Heart right ventricle (tissue), 16 donors: ENCODE measurements at regions of chr15 and their contacts with region 1.

Region 1: DNA sequence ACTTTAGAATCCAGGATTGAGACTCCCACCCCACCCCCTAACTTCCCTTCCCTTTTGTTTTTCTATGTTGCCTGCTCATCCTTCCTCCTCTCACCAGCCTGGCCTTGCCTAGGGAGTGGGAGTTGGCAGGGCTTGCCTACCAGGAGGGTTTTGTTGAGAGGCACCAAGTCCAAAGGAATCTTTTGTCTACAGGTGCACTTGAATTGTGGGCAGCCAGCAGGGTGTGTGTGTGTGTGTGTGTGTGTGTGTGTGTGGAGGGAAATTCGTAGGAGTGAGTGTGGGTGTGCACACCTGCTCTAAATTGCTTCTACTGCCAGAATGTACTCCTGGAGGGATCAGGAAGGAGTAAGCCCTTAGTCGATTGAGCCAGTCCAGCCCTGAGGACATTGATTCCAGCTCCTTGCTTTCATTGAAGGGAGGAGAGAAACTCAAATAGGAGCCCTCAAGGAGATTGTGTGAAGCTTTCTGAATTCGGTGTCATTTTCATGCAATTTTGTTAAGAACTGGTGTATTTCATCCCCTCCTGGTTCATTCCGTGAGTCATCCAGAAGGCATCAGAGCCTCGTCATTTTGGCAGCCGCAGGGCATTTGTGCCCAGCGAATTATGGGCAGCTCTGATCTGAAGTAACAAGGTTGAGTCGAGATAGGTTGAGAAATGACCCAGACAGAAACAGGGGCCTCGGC is 112.1 kb downstream of the SLCO3A1 start:
- DNase-seq: no peak
- ATAC-seq: peak in 6 of 8 donors; percentile 17 to 41 (median 28)
- H3K4me3 ChIP-seq: no peak overlapping the region
- H3K27ac ChIP-seq: peak overlapping the region in 9 of 10 donors; percentile 7 to 57 (median 48)
- H3K4me1 ChIP-seq: peaks cover 25 to 93% (median 68%) of the 10 kb centered on the region in 9 donors
- H3K27me3 ChIP-seq: no peaks in the 10 kb centered on the region
- CTCF ChIP-seq: no peak

Region 2: GRCh38 chr15:92011611-92012367 is 46.1 kb after region 1 on chr15:
- intact Hi-C with region 1: loop called in 1 of 10 experiments (anchors 5 kb)
- DNase-seq: peak in 1 of 2 donors; percentile 28
- ATAC-seq: peak; percentile 41 to 84 (median 60)
- H3K4me3 ChIP-seq: peak overlapping the region in 4 of 10 donors; percentile 16 to 33 (median 24)
- H3K27ac ChIP-seq: peak overlapping the region in 9 of 10 donors; percentile 21 to 69 (median 55)
- H3K4me1 ChIP-seq: peaks cover 10 to 76% (median 62%) of the 10 kb centered on the region in 9 donors
- H3K27me3 ChIP-seq: no peaks in the 10 kb centered on the region
- CTCF ChIP-seq: no peak

Region 3: GRCh38 chr15:92020765-92021164 is 55.1 kb after region 1 on chr15:
- intact Hi-C with region 1: loop called in 2 of 10 experiments (anchors 5 to 10 kb)
- DNase-seq: no peak
- ATAC-seq: peak in 1 of 8 donors; percentile 23
- H3K4me3 ChIP-seq: no peak overlapping the region
- H3K27ac ChIP-seq: peak overlapping the region in 1 of 10 donors; percentile 41
- H3K4me1 ChIP-seq: peaks cover 24 to 75% (median 44%) of the 10 kb centered on the region in 9 donors
- H3K27me3 ChIP-seq: no peaks in the 10 kb centered on the region
- CTCF ChIP-seq: no peak

Region 4: DNA sequence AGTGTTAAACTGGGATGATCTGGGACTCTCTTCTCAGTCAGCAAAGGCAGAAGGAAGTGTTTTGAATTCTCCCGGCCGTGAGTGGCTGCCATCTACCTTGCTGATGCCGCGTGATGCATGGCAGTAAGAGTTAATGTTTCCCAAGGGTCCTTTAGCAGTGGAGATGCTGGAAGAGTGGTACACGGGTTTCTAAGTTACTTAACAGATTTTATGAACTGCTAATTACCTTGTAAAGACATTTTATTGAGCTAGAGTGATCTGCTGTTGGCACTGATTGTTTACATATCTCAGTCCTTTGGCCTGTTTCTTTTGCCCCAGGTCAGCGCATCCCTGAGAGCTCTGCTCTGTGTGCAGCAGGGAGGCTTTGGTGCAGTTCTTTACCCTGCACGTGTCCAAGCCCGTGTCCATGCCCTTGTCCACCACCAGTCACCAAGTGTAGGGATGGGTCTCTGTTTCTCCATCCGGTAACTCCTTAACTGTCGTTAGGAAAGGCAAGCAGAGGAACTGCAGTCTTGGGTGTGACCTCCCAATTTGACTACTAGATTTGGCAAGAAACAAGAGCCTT is 60.1 kb after region 1 on chr15:
- intact Hi-C with region 1: loop called in 2 of 10 experiments (anchors 5 to 10 kb)
- DNase-seq: no peak
- ATAC-seq: no peak
- H3K4me3 ChIP-seq: no peak overlapping the region
- H3K27ac ChIP-seq: no peak overlapping the region
- H3K4me1 ChIP-seq: peaks cover 26 to 92% (median 64%) of the 10 kb centered on the region in 9 donors
- H3K27me3 ChIP-seq: no peaks in the 10 kb centered on the region
- CTCF ChIP-seq: no peak

Region 5: DNA sequence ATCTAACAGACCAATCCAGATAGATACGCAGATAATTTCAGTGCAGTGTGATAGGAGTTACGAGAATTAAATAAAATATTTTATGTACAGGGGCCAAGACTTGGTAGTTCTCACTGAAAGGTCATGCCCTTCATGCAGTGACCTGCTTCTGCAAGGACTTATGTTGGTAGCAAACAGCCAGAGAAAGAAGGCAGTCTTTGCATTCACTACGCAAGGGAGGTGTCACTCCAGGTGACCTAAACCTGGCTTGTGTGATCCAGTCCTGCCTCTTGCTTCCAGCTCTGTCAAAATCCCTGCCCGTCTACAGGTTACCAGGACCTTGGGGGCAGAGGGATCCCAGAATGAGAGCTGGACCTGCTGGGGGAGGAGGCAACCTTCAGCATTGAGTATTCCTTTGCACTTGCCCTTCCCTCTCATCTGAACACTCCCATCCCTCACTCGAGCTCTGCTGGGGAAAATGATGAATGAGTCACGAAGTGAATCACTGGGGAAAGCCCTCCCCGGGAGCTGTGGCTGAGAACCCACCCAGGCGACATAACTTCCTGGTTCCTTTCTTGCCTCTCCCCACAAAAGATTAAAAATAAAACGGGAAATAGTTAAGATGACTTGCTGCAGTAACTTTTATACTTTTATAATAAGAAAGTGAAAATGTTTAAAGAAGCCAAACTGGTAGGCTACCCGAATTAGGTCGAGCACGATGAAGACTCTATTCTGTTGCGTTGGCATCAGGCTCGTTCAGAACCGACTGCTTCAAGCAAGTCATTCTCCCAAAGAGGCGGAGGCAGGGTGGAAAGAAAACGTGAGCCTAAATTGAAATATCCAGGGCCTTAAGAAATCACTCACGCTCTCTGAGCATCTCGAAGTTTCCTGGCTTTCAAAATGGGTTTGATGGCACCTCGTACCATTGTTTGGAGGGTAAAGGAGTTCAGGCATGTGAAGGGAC is 103.9 kb after region 1 on chr15:
- intact Hi-C with region 1: loop called in 4 of 10 experiments (anchors 5 to 10 kb)
- DNase-seq: peak in 1 of 2 donors; percentile 68
- ATAC-seq: peak; percentile 65 to 92 (median 82)
- H3K4me3 ChIP-seq: peak overlapping the region in 8 of 10 donors; percentile 9 to 39 (median 30)
- H3K27ac ChIP-seq: peak overlapping the region in 9 of 10 donors; percentile 29 to 81 (median 72)
- H3K4me1 ChIP-seq: peaks cover 8 to 70% (median 66%) of the 10 kb centered on the region in 9 donors
- H3K27me3 ChIP-seq: no peaks in the 10 kb centered on the region
- CTCF ChIP-seq: no peak

Region 6: GRCh38 chr15:92336419-92336987 is 370.9 kb after region 1 on chr15:
- intact Hi-C with region 1: no loop called
- DNase-seq: peak in 1 of 2 donors; percentile 34
- ATAC-seq: peak in 6 of 8 donors; percentile 27 to 90 (median 57)
- H3K4me3 ChIP-seq: no peak overlapping the region
- H3K27ac ChIP-seq: no peak overlapping the region
- H3K4me1 ChIP-seq: no peaks in the 10 kb centered on the region
- H3K27me3 ChIP-seq: peaks cover 0 to under 1% (median 0%) of the 10 kb centered on the region in 7 donors
- CTCF ChIP-seq: no peak